ENCODE measurements at regions of chrX and their contacts with region 1.

Region 1: GRCh38 chrX:20442597-20442996 is 175.9 kb upstream of the RPS6KA3 start:
- DNase-seq: peak; percentile 88
- H3K4me3 ChIP-seq: no peak overlapping the region
- H3K27ac ChIP-seq: no peak overlapping the region
- H3K4me1 ChIP-seq: no peaks in the 10 kb centered on the region
- H3K27me3 ChIP-seq: no peaks in the 10 kb centered on the region
- CTCF ChIP-seq: peak; percentile 69

Region 2: DNA sequence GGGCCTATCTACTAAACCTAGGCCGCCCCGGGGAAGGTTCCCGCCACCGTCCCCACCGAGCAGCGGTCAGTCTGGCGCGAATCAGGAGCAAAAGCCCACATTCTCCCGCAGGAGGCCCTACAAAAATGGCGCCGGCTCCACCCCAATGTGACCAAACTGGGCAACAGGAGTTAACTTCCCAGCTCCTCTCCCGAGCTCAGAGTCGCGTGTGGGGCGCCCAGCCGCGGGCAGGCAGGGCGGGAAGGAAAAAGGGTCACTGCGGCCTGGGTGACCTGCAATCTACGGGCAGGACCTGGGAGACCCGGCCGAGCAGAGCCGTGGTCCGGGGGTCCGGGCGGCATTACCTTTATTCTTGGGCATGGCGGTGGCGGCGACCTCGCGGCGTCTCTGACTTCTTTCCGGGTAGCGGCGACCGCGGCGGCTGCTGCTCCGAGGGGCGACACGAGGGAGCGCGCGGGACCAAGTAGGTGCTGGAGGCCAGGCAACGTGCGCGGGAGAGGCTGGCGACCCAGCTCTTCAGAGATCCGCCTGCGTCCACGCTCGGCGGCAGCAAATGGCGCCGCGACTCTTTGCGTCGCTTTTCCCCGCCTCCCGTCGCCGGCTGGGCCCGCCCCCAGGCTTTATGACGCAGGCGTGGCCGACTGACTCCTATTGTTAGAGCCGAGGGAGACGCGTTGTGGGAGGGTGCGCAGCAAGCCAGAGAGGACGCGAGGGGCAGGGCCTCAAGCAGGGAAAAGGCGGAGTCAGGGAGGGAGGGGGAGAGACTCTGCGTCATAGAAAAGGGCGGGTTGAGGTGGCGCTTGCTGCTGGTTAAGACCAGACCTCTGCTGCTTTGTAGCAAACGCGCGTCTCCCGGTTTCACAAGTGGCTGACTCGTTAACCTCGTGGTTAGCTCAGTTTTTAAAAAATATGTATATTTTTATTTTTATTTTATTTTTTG is 301.0 kb before region 1 on chrX and contains the start of gene EIF1AX:
- intact Hi-C with region 1: loop called (anchors 10 kb)
- DNase-seq: peak; percentile 99
- H3K4me3 ChIP-seq: peak within 1 kb of the TSS; percentile 63
- H3K27ac ChIP-seq: peak within 1 kb of the TSS; percentile 81
- H3K4me1 ChIP-seq: no peaks in the 10 kb centered on the region
- H3K27me3 ChIP-seq: no peaks in the 10 kb centered on the region
- CTCF ChIP-seq: no peak
- total RNA-seq, gene EIF1AX: 106 to 149 TPM

Region 3: DNA sequence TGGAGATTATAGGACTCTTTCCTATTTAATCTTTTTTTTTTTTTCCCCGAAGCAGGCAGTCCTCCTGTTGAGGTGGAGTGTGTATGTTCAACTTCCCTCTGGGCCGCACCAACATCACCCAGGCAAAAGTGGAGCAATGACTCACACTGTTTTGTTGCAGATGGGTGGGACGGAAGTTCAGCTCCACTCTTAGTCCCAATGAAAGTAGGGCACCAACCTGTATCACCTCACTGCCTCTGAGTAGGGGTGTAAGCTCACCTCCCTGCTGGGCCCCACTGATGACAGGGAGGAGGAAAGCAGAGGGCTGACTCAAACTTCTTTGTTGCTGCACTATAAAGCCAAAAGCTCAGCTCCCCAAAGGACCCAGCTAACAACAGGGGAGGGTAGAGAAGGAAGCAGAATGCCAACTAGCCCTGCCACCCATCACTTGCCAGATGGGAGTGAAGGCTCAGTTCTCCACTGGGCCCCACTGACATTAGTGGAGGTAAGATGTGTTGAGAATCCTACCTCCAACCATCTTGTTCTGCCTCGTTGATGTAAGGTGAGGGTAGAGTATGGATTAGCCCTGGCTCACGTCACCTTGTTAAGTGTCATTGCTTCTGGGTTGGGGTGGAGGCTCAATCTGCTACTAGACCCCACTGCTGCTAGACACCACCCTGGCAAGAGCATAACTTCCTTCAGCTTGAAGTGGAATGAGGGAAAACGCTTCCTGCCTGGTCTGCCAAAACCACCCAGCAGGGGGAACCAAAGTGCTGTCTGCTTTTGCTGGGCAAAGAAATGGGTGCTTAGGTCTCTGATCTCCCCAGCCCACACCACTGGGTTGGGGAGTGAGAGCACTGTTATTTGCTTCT is 190.0 kb before region 1 on chrX:
- intact Hi-C with region 1: loop called (anchors 5 kb)
- DNase-seq: peak; percentile 83
- H3K4me3 ChIP-seq: no peak overlapping the region
- H3K27ac ChIP-seq: peak overlapping the region; percentile 56
- H3K4me1 ChIP-seq: no peaks in the 10 kb centered on the region
- H3K27me3 ChIP-seq: no peaks in the 10 kb centered on the region
- CTCF ChIP-seq: peak; percentile 73

Region 4: GRCh38 chrX:20965270-20966044 is 522.9 kb after region 1 on chrX:
- intact Hi-C with region 1: no loop called
- DNase-seq: no peak
- H3K4me3 ChIP-seq: no peak overlapping the region
- H3K27ac ChIP-seq: no peak overlapping the region
- H3K4me1 ChIP-seq: no peaks in the 10 kb centered on the region
- H3K27me3 ChIP-seq: no peaks in the 10 kb centered on the region
- CTCF ChIP-seq: no peak